Colonic mucosa (tissue), 4 donors: ENCODE measurements at regions of chr1 and their contacts with region 1.

Region 1: DNA sequence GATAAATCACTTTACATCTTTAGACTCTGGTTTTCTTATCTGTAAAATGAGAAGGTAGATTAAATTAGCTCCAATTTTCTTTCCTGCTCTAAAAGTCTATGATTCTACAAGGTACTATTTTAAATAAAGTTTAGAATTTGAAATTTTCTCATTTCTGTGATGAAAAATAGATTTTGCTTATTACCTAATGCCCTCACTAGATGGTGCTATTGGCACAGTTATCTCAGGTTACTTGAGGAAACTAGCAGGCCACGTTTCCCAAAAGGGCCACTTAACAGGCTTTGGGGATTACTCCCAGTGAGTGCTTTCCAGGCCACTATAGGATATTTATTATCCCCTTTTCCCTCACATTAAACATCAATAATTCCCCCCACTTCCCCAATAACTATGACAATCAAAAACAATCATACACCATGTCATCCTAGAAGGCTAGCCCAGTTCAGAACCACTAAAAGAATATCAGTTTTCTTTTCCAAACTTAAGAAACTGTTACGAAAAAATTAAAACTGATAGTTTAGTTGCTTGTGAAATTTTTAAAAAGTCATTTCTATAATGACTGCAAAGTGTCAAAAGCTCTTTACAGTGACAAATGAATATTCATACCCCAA is 30.6 kb downstream of the OMA1 start:
- DNase-seq: peak; percentile 27
- H3K4me3 ChIP-seq: no peak overlapping the region
- H3K27ac ChIP-seq: no peak overlapping the region
- H3K4me1 ChIP-seq: no peaks in the 10 kb centered on the region
- H3K27me3 ChIP-seq: no peaks in the 10 kb centered on the region
- CTCF ChIP-seq: peak; percentile 52

Region 2: DNA sequence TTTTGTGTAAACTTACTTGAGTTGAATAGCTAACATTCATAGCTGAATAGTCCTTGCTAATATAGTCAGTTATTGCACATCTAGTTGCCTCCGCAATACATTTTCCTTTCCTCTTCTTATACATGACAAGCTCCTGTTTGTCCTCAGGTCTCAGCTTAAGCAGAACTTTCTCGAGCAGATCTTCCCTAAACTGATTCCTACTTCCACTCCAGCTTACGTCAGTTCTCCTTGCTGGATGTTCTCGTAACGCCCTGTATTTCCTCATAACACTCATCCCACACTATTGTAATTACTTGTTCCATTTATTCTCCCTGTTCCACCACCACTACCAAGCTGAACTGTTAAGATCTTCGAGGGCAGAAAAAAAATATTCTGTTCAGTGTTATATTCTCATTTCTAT is 45.7 kb after region 1 on chr1:
- intact Hi-C with region 1: no loop called
- DNase-seq: no peak
- H3K4me3 ChIP-seq: no peak overlapping the region
- H3K27ac ChIP-seq: no peak overlapping the region
- H3K4me1 ChIP-seq: no peaks in the 10 kb centered on the region
- H3K27me3 ChIP-seq: no peaks in the 10 kb centered on the region
- CTCF ChIP-seq: no peak

Region 3: GRCh38 chr1:58652651-58653184 is 136.8 kb after region 1 on chr1:
- intact Hi-C with region 1: loop called (anchors 5 kb)
- DNase-seq: peak; percentile 61
- H3K4me3 ChIP-seq: no peak overlapping the region
- H3K27ac ChIP-seq: no peak overlapping the region
- H3K4me1 ChIP-seq: no peaks in the 10 kb centered on the region
- H3K27me3 ChIP-seq: no peaks in the 10 kb centered on the region
- CTCF ChIP-seq: peak; percentile 87

Region 4: DNA sequence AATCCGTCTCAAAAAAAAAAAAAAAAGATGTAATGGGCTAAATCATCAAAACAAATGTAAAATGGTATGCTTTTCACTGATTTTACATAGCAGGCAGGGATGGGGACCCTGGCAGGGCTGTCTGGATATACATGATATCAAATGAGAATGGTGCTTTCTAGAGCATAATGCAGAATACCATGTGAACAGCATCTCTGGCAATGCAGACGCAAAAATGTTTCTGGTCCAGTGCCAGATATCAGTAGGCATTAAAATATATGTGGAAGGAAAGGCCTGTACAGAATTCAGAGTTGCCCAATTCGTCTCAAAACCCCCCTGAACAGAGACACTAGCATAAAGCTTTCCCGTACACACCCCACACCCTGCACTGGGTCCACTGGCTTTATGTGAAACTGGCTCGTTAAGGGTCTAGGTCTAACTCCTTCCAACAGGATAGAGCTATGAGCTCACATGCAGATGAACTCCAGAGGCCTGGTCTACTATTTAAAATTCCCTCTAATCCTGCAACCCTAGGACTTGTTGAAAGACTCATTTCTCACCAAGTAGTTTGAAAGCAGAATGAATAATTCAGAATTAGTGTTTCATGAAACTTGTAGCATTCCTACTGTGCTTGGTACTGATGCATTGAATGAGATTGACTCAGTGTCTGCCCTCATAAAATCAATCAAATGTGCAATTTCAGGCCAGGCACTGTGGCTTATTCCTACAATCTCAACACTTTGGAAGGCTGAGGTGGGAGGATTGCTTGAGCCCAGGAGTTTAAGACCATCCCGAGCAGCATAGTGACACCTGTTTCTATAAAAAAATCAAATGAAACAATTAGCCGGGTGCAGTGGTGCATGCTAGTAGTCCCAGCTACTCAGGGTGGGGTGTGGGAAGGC is 186.6 kb after region 1 on chr1:
- intact Hi-C with region 1: no loop called
- DNase-seq: no peak
- H3K4me3 ChIP-seq: no peak overlapping the region
- H3K27ac ChIP-seq: no peak overlapping the region
- H3K4me1 ChIP-seq: peaks cover 6% of the 10 kb centered on the region
- H3K27me3 ChIP-seq: no peaks in the 10 kb centered on the region
- CTCF ChIP-seq: no peak